CD4-positive, alpha-beta T cell (primary cell): ENCODE measurements at regions of chr1 and their contacts with region 1.

Region 1: GRCh38 chr1:12739613-12740012 is 6.4 kb upstream of the CFAP107 start:
- DNase-seq: no peak
- ATAC-seq: no peak
- H3K4me3 ChIP-seq: no peak overlapping the region
- H3K4me3 Mint-ChIP-seq: no peak overlapping the region
- H3K27ac ChIP-seq: no peak overlapping the region
- H3K27ac Mint-ChIP-seq: no peak overlapping the region
- H3K4me1 ChIP-seq: no peaks in the 10 kb centered on the region
- H3K4me1 Mint-ChIP-seq: no peaks in the 10 kb centered on the region
- H3K27me3 ChIP-seq: peaks cover 22 to 45% of the 10 kb centered on the region in 2 experiments
- H3K27me3 Mint-ChIP-seq: peaks cover 79% of the 10 kb centered on the region
- CTCF ChIP-seq: no peak

Region 2: GRCh38 chr1:12435639-12436344 is 303.8 kb before region 1 on chr1:
- CTCF ChIA-PET with region 1: no interaction called
- POLR2A ChIA-PET with region 1: no interaction called
- intact Hi-C with region 1: no loop called
- DNase-seq: peak in 3 of 14 experiments; percentile 19 to 63 (median 42)
- ATAC-seq: peak; percentile 27
- H3K4me3 ChIP-seq: no peak overlapping the region
- H3K4me3 Mint-ChIP-seq: peak overlapping the region; percentile 56
- H3K27ac ChIP-seq: peak overlapping the region; percentile 13 to 37
- H3K27ac Mint-ChIP-seq: peak overlapping the region; percentile 84
- H3K4me1 ChIP-seq: peaks cover 68% of the 10 kb centered on the region
- H3K4me1 Mint-ChIP-seq: peaks cover 75% of the 10 kb centered on the region
- H3K27me3 ChIP-seq: no peaks in the 10 kb centered on the region
- H3K27me3 Mint-ChIP-seq: no peaks in the 10 kb centered on the region
- CTCF ChIP-seq: no peak

Region 3: DNA sequence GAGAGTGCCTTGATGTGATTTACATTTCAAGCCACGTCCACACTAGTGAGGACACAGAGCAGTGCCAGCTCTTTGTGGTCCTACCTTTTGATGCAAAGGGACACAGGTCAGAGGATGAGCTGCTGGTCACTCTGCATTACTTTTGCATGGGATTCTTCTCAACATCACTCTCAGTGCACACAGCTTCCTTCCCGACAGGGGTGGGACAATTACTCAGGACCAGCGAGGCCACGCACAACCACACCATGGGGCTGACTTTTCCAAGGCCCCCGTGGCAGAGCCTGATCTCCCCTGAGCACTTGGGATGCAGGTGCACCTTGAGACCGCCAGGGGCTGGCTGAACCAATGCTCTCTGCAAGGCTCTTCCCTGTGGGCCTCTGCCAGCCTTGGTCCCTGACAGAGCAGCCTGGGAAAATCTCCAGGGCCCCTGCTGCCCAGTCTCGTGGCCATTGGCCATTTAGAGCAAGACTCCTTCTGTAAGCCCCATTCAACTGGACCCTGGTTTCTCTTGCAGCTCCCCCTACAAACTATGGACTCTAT is 20.7 kb after region 1 on chr1:
- CTCF ChIA-PET with region 1: no interaction called
- POLR2A ChIA-PET with region 1: no interaction called
- intact Hi-C with region 1: loop called in 1 of 2 experiments (anchors 2 kb)
- DNase-seq: no peak
- ATAC-seq: no peak
- H3K4me3 ChIP-seq: no peak overlapping the region
- H3K4me3 Mint-ChIP-seq: no peak overlapping the region
- H3K27ac ChIP-seq: no peak overlapping the region
- H3K27ac Mint-ChIP-seq: no peak overlapping the region
- H3K4me1 ChIP-seq: no peaks in the 10 kb centered on the region
- H3K4me1 Mint-ChIP-seq: no peaks in the 10 kb centered on the region
- H3K27me3 ChIP-seq: peaks cover 4 to 11% of the 10 kb centered on the region in 2 experiments
- H3K27me3 Mint-ChIP-seq: peaks cover 42% of the 10 kb centered on the region
- CTCF ChIP-seq: no peak